ENCODE measurements at regions of chr22 and their contacts with region 1.

Region 1: DNA sequence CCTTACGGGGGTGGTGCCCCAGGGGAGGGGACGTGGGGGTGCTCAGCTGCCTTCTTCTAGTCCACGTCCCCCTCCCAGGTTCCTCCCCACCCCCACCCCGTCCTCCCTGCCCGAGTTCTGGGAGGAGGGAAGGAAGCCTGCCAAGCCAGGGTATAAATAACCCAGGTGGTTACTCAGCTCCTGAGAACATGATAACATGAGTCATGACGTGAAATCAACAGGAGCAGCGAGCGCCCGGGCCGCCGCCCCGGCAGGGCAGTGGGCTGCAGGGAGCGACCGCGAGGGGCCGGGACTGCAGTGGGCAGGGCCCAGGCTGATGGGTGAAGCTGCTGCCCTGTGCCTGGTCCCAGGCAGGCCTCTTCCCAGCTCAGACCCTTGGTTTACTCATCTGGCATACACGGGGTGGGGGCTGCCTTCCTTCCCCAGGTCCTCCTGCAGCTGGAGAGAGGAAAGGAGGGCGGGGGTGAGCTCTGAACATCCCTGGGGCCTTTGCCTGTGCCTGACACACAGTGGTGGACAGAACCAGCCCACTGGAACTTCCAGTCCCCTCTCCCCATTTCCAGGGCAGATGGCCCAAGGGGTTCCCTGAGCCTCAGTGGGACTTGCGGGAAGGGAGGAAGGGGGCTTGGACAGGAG is 8.8 kb upstream of the PDGFB start:
- DNase-seq: peak; percentile 82
- ATAC-seq: peak; percentile 68
- H3K4me3 ChIP-seq: peak overlapping the region; percentile 55
- H3K27ac ChIP-seq: peak overlapping the region; percentile 80
- H3K4me1 ChIP-seq: peaks cover 39% of the 10 kb centered on the region
- H3K27me3 ChIP-seq: no peaks in the 10 kb centered on the region
- CTCF ChIP-seq: no peak

Region 2: DNA sequence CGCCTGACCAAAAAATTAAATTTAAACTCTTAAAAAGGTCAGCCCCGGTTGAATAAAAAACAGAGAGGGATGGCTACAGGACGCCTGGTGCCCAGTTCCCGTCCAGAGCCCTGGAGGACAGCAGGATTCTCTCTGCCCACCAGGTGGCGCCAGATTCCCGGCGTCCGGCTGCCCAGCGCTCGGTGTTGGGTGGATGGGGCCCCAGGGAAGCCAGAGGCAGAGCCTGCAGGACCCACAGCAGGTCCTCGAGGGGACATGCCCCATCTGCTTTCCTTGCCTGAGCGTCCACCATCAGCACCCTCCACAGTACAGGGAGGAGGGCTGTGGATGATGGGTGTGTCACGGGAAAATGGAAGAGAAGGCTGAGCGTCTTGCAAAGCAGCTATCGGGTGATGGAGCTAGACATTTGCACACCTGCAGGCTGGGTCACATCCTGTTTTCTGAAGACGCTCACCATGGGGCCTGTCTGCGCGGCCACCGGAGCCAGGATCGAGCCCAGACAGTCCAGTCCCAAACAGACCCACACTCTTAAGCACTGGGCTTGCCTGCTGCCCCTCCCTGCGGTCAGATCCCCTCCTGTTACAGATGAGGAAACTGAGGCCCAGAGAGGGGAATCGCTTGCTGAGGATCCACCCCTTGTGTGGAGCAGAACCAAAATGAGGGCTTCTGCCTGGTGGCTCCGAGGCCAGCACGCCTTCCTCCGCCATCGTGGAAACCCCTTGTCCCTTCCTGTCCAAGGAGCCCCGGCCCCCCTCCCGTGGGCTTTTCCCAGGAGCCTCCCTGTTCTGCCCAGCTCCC is 82.5 kb before region 1 on chr22:
- CTCF ChIA-PET with region 1: interaction called, 9 read pairs
- POLR2A ChIA-PET with region 1: no interaction called
- intact Hi-C with region 1: loop called (anchors 2 kb)
- DNase-seq: peak; percentile 77
- ATAC-seq: peak; percentile 77
- H3K4me3 ChIP-seq: no peak overlapping the region
- H3K27ac ChIP-seq: no peak overlapping the region
- H3K4me1 ChIP-seq: peaks cover 32% of the 10 kb centered on the region
- H3K27me3 ChIP-seq: no peaks in the 10 kb centered on the region
- CTCF ChIP-seq: peak; percentile 81

Region 3: GRCh38 chr22:39277155-39277607 is 23.6 kb after region 1 on chr22:
- CTCF ChIA-PET with region 1: interaction called, 14 read pairs
- POLR2A ChIA-PET with region 1: no interaction called
- intact Hi-C with region 1: no loop called
- DNase-seq: peak; percentile 73
- ATAC-seq: peak; percentile 83
- H3K4me3 ChIP-seq: 0 out of 2 replicates have a peak overlapping the region, but pooled peaks have one; percentile 34
- H3K27ac ChIP-seq: peak overlapping the region; percentile 86
- H3K4me1 ChIP-seq: peaks cover 22% of the 10 kb centered on the region
- H3K27me3 ChIP-seq: no peaks in the 10 kb centered on the region
- CTCF ChIP-seq: no peak

Region 4: GRCh38 chr22:39292561-39293098 is 39.1 kb after region 1 on chr22:
- CTCF ChIA-PET with region 1: no interaction called
- POLR2A ChIA-PET with region 1: no interaction called
- intact Hi-C with region 1: loop called (anchors 5 kb)
- DNase-seq: peak; percentile 87
- ATAC-seq: peak; percentile 89
- H3K4me3 ChIP-seq: no peak overlapping the region
- H3K27ac ChIP-seq: peak overlapping the region; percentile 81
- H3K4me1 ChIP-seq: peaks cover 45% of the 10 kb centered on the region
- H3K27me3 ChIP-seq: no peaks in the 10 kb centered on the region
- CTCF ChIP-seq: no peak

Region 5: GRCh38 chr22:39308614-39309363 is 55.2 kb after region 1 on chr22:
- CTCF ChIA-PET with region 1: interaction called, 3 read pairs
- POLR2A ChIA-PET with region 1: no interaction called
- intact Hi-C with region 1: loop called (anchors 2 kb)
- DNase-seq: peak; percentile 89
- ATAC-seq: peak; percentile 60
- H3K4me3 ChIP-seq: peak overlapping the region; percentile 46; the same call in 1 of the 2 replicates
- H3K27ac ChIP-seq: peak overlapping the region; percentile 68
- H3K4me1 ChIP-seq: peaks cover 18% of the 10 kb centered on the region
- H3K27me3 ChIP-seq: no peaks in the 10 kb centered on the region
- CTCF ChIP-seq: no peak